CD4-positive, alpha-beta memory T cell (primary cell): ENCODE measurements at regions of chr6 and their contacts with region 1.

Region 1: GRCh38 chr6:131258816-131259476 is 123.7 kb downstream of the AKAP7 start:
- DNase-seq: no peak
- H3K4me3 ChIP-seq: no peak overlapping the region
- H3K4me3 Mint-ChIP-seq: no peak overlapping the region
- H3K27ac ChIP-seq: no peak overlapping the region
- H3K27ac Mint-ChIP-seq: peak overlapping the region in 5 of 7 donors; percentile 54 to 85 (median 74)
- H3K4me1 ChIP-seq: no peaks in the 10 kb centered on the region
- H3K4me1 Mint-ChIP-seq: peaks cover 8 to 23% (median 15%) of the 10 kb centered on the region in 4 donors
- H3K27me3 ChIP-seq: no peaks in the 10 kb centered on the region
- H3K27me3 Mint-ChIP-seq: no peaks in the 10 kb centered on the region

Region 2: GRCh38 chr6:131213501-131213990 is 45.4 kb before region 1 on chr6:
- CTCF ChIA-PET with region 1: no interaction called
- POLR2A ChIA-PET with region 1: no interaction called
- intact Hi-C with region 1: loop called (anchors 5 kb)
- DNase-seq: no peak
- H3K4me3 ChIP-seq: no peak overlapping the region
- H3K4me3 Mint-ChIP-seq: peak overlapping the region in 6 of 8 donors; percentile 15 to 62 (median 39)
- H3K27ac ChIP-seq: no peak overlapping the region
- H3K27ac Mint-ChIP-seq: peak overlapping the region in 6 of 7 donors; percentile 32 to 85 (median 70)
- H3K4me1 ChIP-seq: peaks cover 31% of the 10 kb centered on the region
- H3K4me1 Mint-ChIP-seq: peaks cover 38 to 47% (median 43%) of the 10 kb centered on the region in 4 donors
- H3K27me3 ChIP-seq: no peaks in the 10 kb centered on the region
- H3K27me3 Mint-ChIP-seq: no peaks in the 10 kb centered on the region